ENCODE measurements at regions of chr17 and their contacts with region 1.

Region 1: GRCh38 chr17:77096570-77097214 is 44.1 kb upstream of the SEC14L1 start:
- DNase-seq: peak; percentile 72
- H3K4me3 ChIP-seq: no peak overlapping the region
- H3K27ac ChIP-seq: no peak overlapping the region
- H3K4me1 ChIP-seq: peaks cover 14% of the 10 kb centered on the region
- CTCF ChIP-seq: peak; percentile 96

Region 2: DNA sequence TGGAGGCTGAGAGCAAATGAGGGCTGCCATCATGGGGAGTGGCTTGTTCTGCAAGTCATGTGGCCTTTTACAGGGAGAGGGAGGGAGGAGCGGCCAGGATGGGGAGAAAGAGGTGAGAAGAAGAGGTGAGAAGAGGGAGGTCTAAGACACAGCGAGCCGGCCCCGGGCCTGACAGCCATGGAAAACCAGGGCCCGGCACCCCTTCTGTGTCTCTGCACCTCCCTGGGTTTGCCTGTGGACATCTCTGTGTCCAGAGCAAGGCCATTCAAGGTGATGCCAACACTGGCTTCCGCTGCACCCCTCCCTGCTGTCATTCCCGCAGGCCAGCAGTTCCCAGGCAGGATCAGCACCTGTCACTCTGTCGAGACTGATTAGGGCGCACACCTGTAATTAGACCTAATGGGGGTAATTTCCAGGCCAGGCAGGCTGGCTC is 152.9 kb before region 1 on chr17:
- CTCF ChIA-PET with region 1: no interaction called
- POLR2A ChIA-PET with region 1: no interaction called
- intact Hi-C with region 1: no loop called
- DNase-seq: no peak
- H3K4me3 ChIP-seq: no peak overlapping the region
- H3K27ac ChIP-seq: no peak overlapping the region
- H3K4me1 ChIP-seq: no peaks in the 10 kb centered on the region
- CTCF ChIP-seq: no peak

Region 3: DNA sequence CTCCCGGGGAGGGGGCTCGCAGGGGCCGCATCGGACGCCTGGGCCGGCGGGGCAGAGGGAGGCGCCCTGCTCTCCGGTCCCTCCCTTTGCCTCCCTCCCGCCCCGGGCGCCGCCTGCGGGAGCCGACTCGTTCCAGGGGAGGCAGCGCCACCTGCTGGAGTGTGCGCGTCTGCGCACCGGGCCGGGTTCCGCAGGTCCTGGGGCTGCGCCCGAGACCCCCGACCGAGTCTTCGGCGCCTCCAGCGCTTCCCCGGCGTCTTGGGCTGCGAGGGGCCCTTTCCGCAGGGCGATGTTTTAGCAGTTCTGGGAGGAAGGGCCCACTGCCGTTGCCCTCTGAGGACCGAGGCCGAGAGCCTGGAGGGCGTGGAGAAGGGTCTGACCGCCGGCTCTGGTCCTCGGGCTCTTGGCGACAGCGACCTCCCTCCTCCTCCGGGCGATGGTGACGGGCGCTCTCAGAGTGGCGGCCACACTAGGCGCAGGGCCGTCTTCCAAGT is 150.4 kb after region 1 on chr17:
- CTCF ChIA-PET with region 1: no interaction called
- POLR2A ChIA-PET with region 1: no interaction called
- intact Hi-C with region 1: loop called (anchors 1 kb)
- DNase-seq: peak; percentile 91
- H3K4me3 ChIP-seq: peak overlapping the region; percentile 61
- H3K27ac ChIP-seq: no peak overlapping the region
- H3K4me1 ChIP-seq: peaks cover 14% of the 10 kb centered on the region
- CTCF ChIP-seq: peak; percentile 94

Region 4: GRCh38 chr17:77319211-77320043 is 222.7 kb after region 1 on chr17:
- CTCF ChIA-PET with region 1: no interaction called
- POLR2A ChIA-PET with region 1: no interaction called
- intact Hi-C with region 1: no loop called
- DNase-seq: peak; percentile 57
- H3K4me3 ChIP-seq: no peak overlapping the region
- H3K27ac ChIP-seq: peak overlapping the region; percentile 25
- H3K4me1 ChIP-seq: peaks cover 76% of the 10 kb centered on the region
- CTCF ChIP-seq: no peak